Activated T-helper 1 cell treated with anti-CD3 and anti-CD28 coated beads, Interleukin-12 subunit alpha, Interleukin-12 subunit beta, Interleukin-2, Interleukin-4 antibody, amounts not matched to agents 30 ng/mL and 10 ng/mL and 1 ng/mL, durations not matched to agents 14 hours and 24 hours and 36 hours (primary cell): ENCODE measurements at regions of chr5 and their contacts with region 1.

Region 1: GRCh38 chr5:139293504-139294373 is at the start of gene MATR3:
- DNase-seq: peak; percentile 88
- H3K4me3 Mint-ChIP-seq: peak within 1 kb of the TSS; percentile 95
- H3K27ac Mint-ChIP-seq: peak within 1 kb of the TSS; percentile 94
- H3K4me1 Mint-ChIP-seq: peaks cover 37% of the 10 kb centered on the region
- H3K27me3 Mint-ChIP-seq: no peaks in the 10 kb centered on the region
- total RNA-seq, gene MATR3: 232 and 258 TPM in 2 replicates

Region 2: DNA sequence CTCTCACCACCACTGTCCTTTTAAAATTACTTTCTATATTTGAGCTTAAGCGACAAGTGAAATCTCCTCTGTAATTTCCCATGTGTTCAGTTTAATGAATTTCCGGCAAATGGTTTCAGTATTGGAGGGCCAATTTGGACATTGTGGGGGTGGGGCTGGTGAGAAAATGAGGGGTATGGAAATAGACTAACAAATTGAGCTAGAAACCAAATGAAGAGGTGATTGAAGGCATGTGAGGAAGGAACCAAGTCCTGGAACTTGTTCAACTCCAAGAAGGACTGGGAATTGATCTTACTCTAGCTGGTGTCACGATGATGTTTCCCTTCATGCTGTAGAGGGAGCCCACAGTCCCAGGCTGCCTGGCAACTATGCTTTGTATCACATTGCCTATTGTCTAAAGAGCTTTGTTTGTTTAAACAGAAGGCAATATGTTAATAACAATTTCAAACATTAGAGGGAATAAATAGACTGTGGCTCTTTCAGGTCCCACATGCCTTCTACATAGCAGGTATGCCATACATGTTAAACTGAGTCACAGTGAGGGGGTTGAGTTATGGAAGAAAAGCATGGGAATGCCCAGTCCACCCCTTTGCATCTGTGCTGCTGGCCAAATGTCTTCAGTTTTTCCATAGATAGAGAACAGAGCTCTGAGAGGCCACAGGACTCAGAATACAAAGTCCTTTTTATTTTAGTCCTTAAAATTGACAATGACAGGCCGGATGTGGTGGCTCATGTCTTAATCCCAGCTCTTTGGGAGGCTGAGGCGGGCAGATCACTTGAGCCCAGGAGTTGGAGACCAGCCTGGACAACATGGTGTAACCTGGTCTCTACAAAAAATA is 25.2 kb before region 1 on chr5:
- intact Hi-C with region 1: no loop called
- DNase-seq: no peak
- H3K4me3 Mint-ChIP-seq: no peak overlapping the region
- H3K27ac Mint-ChIP-seq: no peak overlapping the region
- H3K4me1 Mint-ChIP-seq: peaks cover 23% of the 10 kb centered on the region
- H3K27me3 Mint-ChIP-seq: peaks cover 9% of the 10 kb centered on the region

Region 3: DNA sequence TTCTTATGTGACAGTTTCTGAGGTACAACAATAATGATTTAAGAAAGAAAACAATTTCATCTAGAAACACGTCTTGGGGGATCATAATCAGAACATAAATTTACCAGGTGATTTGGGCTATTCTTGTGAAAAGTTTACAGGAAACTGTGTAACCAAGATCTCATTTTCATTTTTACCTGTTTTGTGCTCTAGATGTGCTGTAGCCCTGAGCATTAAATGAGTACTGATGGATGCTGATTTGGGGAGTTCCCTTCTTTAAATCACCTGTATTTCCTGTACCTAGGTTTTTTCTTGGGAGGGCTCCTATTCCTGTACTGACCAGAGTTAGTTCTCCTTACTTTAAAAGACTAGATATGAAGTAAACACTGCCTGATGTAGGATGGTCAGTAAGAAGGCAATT is 12.5 kb after region 1 on chr5:
- intact Hi-C with region 1: loop called (anchors 1 kb)
- DNase-seq: no peak
- H3K4me3 Mint-ChIP-seq: no peak overlapping the region
- H3K27ac Mint-ChIP-seq: peak overlapping the region; percentile 77
- H3K4me1 Mint-ChIP-seq: peaks cover 64% of the 10 kb centered on the region
- H3K27me3 Mint-ChIP-seq: no peaks in the 10 kb centered on the region

Region 4: DNA sequence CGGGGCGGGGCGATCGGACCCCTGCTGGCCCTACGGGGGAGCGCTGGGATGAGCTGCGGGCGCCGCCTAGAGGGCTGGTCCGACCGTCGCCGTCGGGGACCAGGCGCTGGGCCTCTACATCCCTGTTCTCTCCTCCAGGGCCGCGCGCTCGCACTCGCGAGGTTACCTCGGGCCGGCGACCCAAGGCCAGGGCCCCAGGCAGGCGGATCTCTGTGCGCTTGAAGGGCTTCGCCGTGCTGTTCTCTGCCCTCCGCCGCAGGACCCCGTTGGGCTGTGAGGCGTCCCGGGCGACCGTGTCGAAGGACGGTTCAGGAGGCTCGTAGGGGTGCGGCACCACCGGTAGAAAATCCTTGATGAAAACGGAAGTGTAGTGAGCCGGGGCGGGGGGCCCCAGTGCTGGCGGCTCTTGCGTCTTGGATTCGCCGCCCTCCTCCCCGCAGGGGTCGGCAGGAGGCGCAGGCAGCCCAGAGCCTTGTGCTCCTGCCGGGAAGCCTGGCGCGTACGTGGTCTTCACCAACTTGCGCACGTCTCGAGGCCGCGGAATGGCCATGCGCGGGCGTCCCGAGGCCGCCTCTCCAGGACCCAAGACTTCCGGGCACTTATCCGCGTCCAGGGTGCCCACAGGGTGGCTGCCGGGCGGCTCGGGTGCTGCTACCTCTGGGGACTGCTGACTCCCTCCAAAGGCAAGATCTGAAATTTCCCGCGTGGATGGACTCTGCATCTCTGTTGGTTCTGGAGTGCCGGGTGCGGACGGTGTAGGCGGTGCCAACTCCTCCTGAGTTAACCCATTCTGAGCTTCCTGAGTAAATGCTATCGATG is 99.1 kb after region 1 on chr5:
- intact Hi-C with region 1: loop called (anchors 2 kb)
- DNase-seq: peak; percentile 84
- H3K4me3 Mint-ChIP-seq: peak overlapping the region; percentile 96
- H3K27ac Mint-ChIP-seq: peak overlapping the region; percentile 95
- H3K4me1 Mint-ChIP-seq: peaks cover 58% of the 10 kb centered on the region
- H3K27me3 Mint-ChIP-seq: no peaks in the 10 kb centered on the region

Region 5: DNA sequence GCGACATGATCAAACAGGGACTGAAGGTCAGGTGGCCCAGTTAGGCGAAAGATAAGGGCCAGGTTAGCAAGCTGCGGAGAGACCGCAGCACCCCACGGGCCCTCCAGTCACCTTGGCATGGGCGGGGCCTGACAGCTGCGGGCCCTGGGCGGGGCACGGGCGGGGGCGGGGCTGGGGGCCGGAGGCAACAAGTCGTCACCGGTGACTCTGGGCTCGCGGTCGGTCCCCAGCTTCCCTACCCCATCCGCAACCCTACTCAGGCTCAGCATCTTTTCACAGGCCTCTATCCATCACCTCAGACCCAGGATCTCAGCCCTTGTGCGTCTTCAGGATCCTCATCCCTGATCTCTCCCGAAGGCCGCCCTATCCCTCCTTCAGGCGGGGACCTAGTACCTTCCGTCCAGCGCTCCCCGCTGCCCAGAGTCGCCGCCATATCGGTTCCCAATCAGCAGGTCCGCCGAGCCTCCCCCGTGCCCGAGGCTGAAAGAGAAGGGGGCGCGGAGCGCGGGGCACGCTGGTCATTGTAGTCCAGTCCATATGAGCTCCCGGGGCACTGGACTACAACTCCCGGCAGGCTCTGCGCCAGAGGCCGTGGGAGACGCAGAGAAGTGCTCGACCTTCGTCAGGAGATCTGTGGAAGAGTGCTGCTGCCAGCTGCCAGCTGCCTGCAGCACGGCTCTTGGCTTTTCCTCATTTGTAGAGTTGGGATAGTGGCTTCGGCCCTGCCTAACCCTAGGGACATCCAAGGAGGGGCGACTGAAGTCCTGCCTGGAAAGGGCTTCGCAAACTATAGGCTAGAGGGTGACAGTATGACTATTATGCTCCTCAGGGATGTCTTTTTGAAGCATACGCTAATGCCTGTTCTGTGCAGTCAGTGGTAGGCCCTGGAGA is 145.5 kb after region 1 on chr5 and contains the start of gene DNAJC18:
- intact Hi-C with region 1: no loop called
- DNase-seq: peak; percentile 86
- H3K4me3 Mint-ChIP-seq: peak within 1 kb of the TSS; percentile 95
- H3K27ac Mint-ChIP-seq: peak within 1 kb of the TSS; percentile 99
- H3K4me1 Mint-ChIP-seq: peaks cover 66% of the 10 kb centered on the region
- H3K27me3 Mint-ChIP-seq: no peaks in the 10 kb centered on the region
- total RNA-seq, gene DNAJC18: 30.0 and 36.3 TPM in 2 replicates